ENCODE measurements at regions of chr3 and their contacts with region 1.

Region 1: GRCh38 chr3:178084938-178085816 is 451.1 kb upstream of the KCNMB2 start:
- DNase-seq: no peak
- H3K4me3 ChIP-seq: no peak overlapping the region
- H3K27ac ChIP-seq: no peak overlapping the region
- H3K4me1 ChIP-seq: no peaks in the 10 kb centered on the region
- H3K27me3 ChIP-seq: no peaks in the 10 kb centered on the region
- CTCF ChIP-seq: no peak

Region 2: GRCh38 chr3:177893321-177893720 is 191.9 kb before region 1 on chr3:
- CTCF ChIA-PET with region 1: no interaction called
- dilution Hi-C with region 1: no loop called
- in situ Hi-C with region 1: no loop called
- intact Hi-C with region 1: no loop called
- DNase-seq: no peak
- H3K4me3 ChIP-seq: no peak overlapping the region
- H3K27ac ChIP-seq: no peak overlapping the region
- H3K4me1 ChIP-seq: no peaks in the 10 kb centered on the region
- H3K27me3 ChIP-seq: no peaks in the 10 kb centered on the region
- CTCF ChIP-seq: peak in 1 of 2 donors; percentile 22

Region 3: GRCh38 chr3:177994976-177995375 is 90.2 kb before region 1 on chr3:
- CTCF ChIA-PET with region 1: no interaction called
- dilution Hi-C with region 1: loop called (anchors 5 kb)
- in situ Hi-C with region 1: no loop called
- intact Hi-C with region 1: no loop called
- DNase-seq: peak; percentile 23
- H3K4me3 ChIP-seq: no peak overlapping the region
- H3K27ac ChIP-seq: no peak overlapping the region
- H3K4me1 ChIP-seq: no peaks in the 10 kb centered on the region
- H3K27me3 ChIP-seq: no peaks in the 10 kb centered on the region
- CTCF ChIP-seq: no peak

Measured in mammary epithelial cell (primary cell).